IMR-90 (cell line): ENCODE measurements at regions of chr1 and their contacts with region 1.

Region 1: GRCh38 chr1:53860967-53861411 is 22.9 kb upstream of the NDC1 start:
- DNase-seq: peak; percentile 61
- ATAC-seq: peak; percentile 87
- H3K4me3 ChIP-seq: no peak overlapping the region
- H3K27ac ChIP-seq: no peak overlapping the region
- H3K4me1 ChIP-seq: no peaks in the 10 kb centered on the region
- H3K27me3 ChIP-seq: no peaks in the 10 kb centered on the region
- CTCF ChIP-seq: peak; percentile 81
- POLR2A ChIP-seq: no peak
- RAD21 ChIP-seq: peak; percentile 80

Region 2: GRCh38 chr1:53847980-53848379 is 13.0 kb before region 1 on chr1:
- CTCF ChIA-PET with region 1: interaction called, 11 read pairs
- POLR2A ChIA-PET with region 1: interaction called, 3 read pairs
- dilution Hi-C with region 1: no loop called
- in situ Hi-C with region 1: no loop called
- intact Hi-C with region 1: no loop called
- DNase-seq: no peak
- ATAC-seq: no peak
- H3K4me3 ChIP-seq: no peak overlapping the region
- H3K27ac ChIP-seq: no peak overlapping the region
- H3K4me1 ChIP-seq: no peaks in the 10 kb centered on the region
- H3K27me3 ChIP-seq: no peaks in the 10 kb centered on the region; the same call in 1 of the 2 replicates
- CTCF ChIP-seq: no peak
- POLR2A ChIP-seq: no peak
- RAD21 ChIP-seq: no peak

Region 3: DNA sequence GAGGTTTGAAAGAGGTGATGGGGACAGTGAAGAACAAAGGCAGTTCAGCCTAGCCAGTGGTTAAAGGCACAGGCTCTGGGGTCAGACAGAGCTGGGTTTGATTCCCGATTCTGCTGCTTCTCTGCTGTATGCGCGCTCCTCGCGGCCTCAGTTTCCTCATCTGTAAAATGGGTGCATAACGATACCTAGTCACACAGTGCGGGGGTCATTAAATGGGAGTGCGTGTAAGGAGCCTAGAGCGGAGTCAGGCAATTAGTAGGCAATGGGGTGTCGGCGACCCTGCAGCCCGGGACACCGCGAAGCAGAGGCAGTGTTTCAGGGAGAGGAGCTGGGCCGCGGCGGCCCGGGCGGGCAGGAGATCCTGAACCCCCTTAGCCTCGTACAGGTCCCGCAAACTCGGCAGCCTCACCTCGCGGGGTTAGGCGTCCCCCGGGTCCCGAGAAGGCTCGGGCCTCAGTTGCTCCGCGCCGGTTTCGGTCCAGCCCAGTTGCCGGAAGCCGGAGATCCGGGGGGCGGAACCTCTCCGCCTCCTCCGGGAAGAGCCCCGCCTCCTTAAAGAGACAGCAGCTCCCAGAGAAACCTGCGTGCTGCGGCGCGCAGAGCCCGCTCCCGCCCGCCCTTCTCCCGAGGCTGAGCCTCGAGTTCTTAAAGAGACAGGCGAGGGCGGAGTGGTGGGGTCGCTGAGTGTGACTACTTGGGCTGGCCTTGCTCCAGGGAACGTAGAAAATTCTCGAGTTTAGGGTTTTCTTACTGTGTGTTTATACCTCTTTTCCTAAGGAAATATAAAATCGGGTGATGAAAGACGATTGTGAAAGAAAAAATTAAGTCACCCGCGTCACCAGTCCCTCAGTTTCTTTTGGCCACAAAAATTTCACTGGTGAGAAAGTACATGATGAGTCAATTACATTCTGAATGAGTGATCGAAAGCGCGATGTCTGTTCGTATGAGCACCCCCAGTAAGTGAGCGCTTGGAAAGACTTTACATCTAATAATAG is 28.6 kb after region 1 on chr1 and contains the start of gene YIPF1:
- CTCF ChIA-PET with region 1: no interaction called
- POLR2A ChIA-PET with region 1: no interaction called
- dilution Hi-C with region 1: no loop called
- in situ Hi-C with region 1: no loop called
- intact Hi-C with region 1: no loop called
- DNase-seq: peak; percentile 87
- ATAC-seq: peak; percentile 100
- H3K4me3 ChIP-seq: peak within 1 kb of the TSS; percentile 97
- H3K27ac ChIP-seq: peak within 1 kb of the TSS; percentile 75
- H3K4me1 ChIP-seq: peaks cover 3% of the 10 kb centered on the region
- H3K27me3 ChIP-seq: no peaks in the 10 kb centered on the region
- CTCF ChIP-seq: no peak
- POLR2A ChIP-seq: no peak
- RAD21 ChIP-seq: no peak; the same call in 1 of the 2 replicates
- total RNA-seq, gene YIPF1: 28.9 and 35.3 TPM in 2 replicates

Region 4: DNA sequence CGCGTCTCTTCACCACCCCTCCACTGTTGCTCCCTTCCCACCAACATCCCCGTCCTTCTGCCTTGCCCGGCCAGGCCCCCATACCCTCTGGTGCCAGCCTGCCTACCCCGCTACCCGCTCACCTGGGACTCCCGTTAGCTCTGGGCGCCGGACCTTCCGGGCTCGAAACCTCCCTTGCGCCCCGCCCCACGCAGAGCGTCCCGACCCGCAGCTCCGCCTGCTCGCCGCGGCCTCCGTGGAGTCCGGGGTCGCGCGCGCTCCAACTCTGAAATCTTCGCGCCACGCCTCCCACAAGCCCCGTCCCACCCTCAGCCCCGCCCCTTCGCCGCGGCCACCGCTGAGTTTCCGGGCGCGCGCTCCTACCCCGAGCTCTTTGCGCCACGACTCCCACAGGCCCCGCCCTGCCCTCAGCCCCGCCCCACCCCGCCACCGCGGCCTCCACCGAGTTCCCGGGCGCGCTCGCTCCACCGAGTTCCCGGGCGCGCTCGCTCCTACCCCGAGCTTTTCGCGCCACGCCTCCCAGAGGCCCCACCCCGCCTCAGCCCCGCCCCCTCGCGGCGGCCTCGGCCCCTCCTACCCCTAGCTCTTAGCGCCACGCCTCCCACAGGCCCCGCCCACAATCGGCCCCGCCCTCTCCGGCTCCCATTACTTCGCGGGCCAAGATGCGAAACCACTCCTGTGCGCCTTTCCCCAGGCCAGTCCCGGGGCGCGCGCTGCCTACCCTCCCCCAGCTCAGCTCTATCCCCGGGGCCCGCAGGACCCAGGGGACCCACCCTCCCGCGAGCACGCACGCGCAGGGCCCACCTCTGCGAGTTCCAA is 84.7 kb after region 1 on chr1 and contains the start of gene IFT25:
- CTCF ChIA-PET with region 1: interaction called, 3 read pairs
- POLR2A ChIA-PET with region 1: no interaction called
- dilution Hi-C with region 1: no loop called
- in situ Hi-C with region 1: no loop called
- intact Hi-C with region 1: loop called (anchors 5 kb)
- DNase-seq: peak; percentile 93
- ATAC-seq: peak; percentile 89
- H3K4me3 ChIP-seq: peak within 1 kb of the TSS; percentile 100
- H3K27ac ChIP-seq: peak within 1 kb of the TSS; percentile 98
- H3K4me1 ChIP-seq: peaks cover 10% of the 10 kb centered on the region
- H3K27me3 ChIP-seq: no peaks in the 10 kb centered on the region
- CTCF ChIP-seq: no peak
- POLR2A ChIP-seq: peak; percentile 47
- RAD21 ChIP-seq: no peak; the same call in 1 of the 2 replicates
- total RNA-seq, gene IFT25: 9.1 and 30.0 TPM in 2 replicates

Region 5: GRCh38 chr1:54052934-54053744 is 192.2 kb after region 1 on chr1 and contains the starts of genes TCEANC2 and TMEM59:
- CTCF ChIA-PET with region 1: no interaction called
- POLR2A ChIA-PET with region 1: no interaction called
- dilution Hi-C with region 1: no loop called
- in situ Hi-C with region 1: loop called (anchors 25 kb)
- intact Hi-C with region 1: loop called (anchors 5 kb)
- DNase-seq: peak; percentile 99
- ATAC-seq: peak; percentile 92
- H3K4me3 ChIP-seq: peak within 1 kb of the TSS; percentile 79
- H3K27ac ChIP-seq: peak within 1 kb of the TSS; percentile 75
- H3K4me1 ChIP-seq: peaks cover 2% of the 10 kb centered on the region; the same call in 1 of the 2 replicates
- H3K27me3 ChIP-seq: no peaks in the 10 kb centered on the region
- CTCF ChIP-seq: 0 out of 2 replicates have a peak, but pooled peaks have one; percentile 2
- POLR2A ChIP-seq: peak; percentile 54
- RAD21 ChIP-seq: no peak
- total RNA-seq, gene TCEANC2: 3.1 and 3.2 TPM in 2 replicates
- total RNA-seq, gene TMEM59: 199 and 241 TPM in 2 replicates

Region 6: GRCh38 chr1:54081306-54082270 is 220.6 kb after region 1 on chr1:
- CTCF ChIA-PET with region 1: interaction called, 3 read pairs
- POLR2A ChIA-PET with region 1: no interaction called
- dilution Hi-C with region 1: no loop called
- in situ Hi-C with region 1: no loop called
- intact Hi-C with region 1: loop called (anchors 1 kb)
- DNase-seq: peak; percentile 67
- ATAC-seq: peak; percentile 98
- H3K4me3 ChIP-seq: no peak overlapping the region
- H3K27ac ChIP-seq: no peak overlapping the region
- H3K4me1 ChIP-seq: no peaks in the 10 kb centered on the region
- H3K27me3 ChIP-seq: no peaks in the 10 kb centered on the region
- CTCF ChIP-seq: peak; percentile 67
- POLR2A ChIP-seq: no peak
- RAD21 ChIP-seq: peak; percentile 58

Region 7: GRCh38 chr1:54199765-54200518 is 339.0 kb after region 1 on chr1 and contains the starts of genes CYB5RL and MRPL37:
- CTCF ChIA-PET with region 1: no interaction called
- POLR2A ChIA-PET with region 1: no interaction called
- dilution Hi-C with region 1: no loop called
- in situ Hi-C with region 1: loop called (anchors 25 kb)
- intact Hi-C with region 1: no loop called
- DNase-seq: peak; percentile 97
- ATAC-seq: peak; percentile 99
- H3K4me3 ChIP-seq: peak within 1 kb of the TSS; percentile 73
- H3K27ac ChIP-seq: peak within 1 kb of the TSS; percentile 41
- H3K4me1 ChIP-seq: peaks cover 4% of the 10 kb centered on the region
- H3K27me3 ChIP-seq: no peaks in the 10 kb centered on the region
- CTCF ChIP-seq: no peak
- POLR2A ChIP-seq: peak; percentile 84
- RAD21 ChIP-seq: 0 out of 2 replicates have a peak, but pooled peaks have one; percentile 1
- total RNA-seq, gene CYB5RL: 3.3 and 3.8 TPM in 2 replicates
- total RNA-seq, gene MRPL37: 111 and 132 TPM in 2 replicates

Region 8: DNA sequence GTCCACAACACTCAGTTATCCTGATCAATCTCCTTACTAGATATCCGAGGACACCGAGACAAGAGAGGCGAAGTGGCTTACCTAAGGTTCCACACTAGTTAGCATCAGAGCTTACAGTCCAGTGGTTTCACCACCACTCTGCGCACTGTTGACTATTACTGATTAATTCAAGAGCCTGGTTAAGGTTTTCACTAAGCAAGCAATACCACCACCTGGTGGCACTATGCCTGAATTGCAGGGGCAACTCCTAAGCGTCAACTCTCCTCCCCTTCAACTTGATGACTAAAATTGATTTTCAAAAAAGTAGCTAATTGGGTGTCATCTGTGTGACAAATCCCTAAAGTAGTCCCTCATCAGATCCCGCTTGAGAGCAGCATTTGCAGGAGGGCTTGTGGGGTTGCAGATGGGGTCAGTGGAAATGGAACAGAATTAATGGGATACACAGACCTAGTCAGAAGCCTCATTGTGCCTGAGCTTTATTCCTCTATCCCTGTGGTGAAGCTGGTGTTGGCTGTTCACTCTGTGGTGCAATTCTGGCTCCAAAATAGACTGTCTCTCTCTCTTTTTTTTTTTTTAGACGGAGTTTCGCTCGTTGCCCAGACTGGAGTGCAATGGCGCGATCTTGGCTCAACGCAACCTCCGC is 931.0 kb after region 1 on chr1:
- CTCF ChIA-PET with region 1: no interaction called
- POLR2A ChIA-PET with region 1: no interaction called
- dilution Hi-C with region 1: no loop called
- in situ Hi-C with region 1: loop called (anchors 25 kb)
- intact Hi-C with region 1: no loop called
- DNase-seq: peak; percentile 34
- ATAC-seq: peak; percentile 56
- H3K4me3 ChIP-seq: no peak overlapping the region
- H3K27ac ChIP-seq: no peak overlapping the region
- H3K4me1 ChIP-seq: no peaks in the 10 kb centered on the region
- H3K27me3 ChIP-seq: peaks cover 48% of the 10 kb centered on the region
- CTCF ChIP-seq: peak; percentile 50
- POLR2A ChIP-seq: no peak
- RAD21 ChIP-seq: peak; percentile 57